IMR-90 (cell line): ENCODE measurements at regions of chr6 and their contacts with region 1.

Region 1: DNA sequence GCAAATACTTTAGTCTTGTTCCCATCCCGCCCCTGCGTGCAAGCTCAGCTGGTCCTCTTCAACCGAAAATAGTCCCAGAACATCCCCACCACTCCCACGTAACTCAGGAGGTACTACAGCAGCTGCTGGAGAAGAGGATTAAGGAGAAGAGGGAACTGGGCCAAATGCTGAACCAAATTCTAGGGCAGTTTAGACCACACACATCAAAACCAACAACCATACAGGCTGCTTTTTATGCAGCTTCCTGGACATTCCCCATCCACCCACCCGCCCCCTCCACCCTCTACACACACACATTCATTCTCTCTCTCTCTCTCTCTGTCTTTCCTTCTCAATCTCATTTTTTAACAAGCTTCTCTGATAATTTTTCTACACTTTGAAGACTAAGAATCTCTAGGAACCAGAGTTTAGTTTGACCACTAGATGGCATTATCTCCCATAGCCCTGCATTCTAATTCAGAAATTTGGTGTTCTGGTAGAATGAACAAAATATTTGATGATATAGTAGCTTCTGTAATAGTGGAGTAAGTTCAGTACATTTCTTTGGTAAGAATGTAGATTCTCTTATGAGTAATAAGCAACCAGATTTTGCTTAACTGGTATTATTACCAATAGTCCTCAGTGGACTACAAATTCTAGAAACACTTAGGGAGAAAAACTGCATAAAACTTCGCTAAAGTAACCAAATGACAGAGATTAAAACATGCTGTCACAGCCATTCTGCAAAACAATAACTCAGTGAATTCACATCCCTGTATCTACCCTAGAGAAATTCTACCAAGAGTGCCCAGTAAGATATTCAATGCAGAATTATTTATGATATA is 52.1 kb upstream of the BEND6 start:
- DNase-seq: peak; percentile 76
- ATAC-seq: peak; percentile 48
- H3K4me3 ChIP-seq: no peak overlapping the region
- H3K27ac ChIP-seq: peak overlapping the region; percentile 58
- H3K4me1 ChIP-seq: peaks cover 19% of the 10 kb centered on the region
- H3K27me3 ChIP-seq: no peaks in the 10 kb centered on the region
- CTCF ChIP-seq: peak; percentile 78
- POLR2A ChIP-seq: no peak
- RAD21 ChIP-seq: peak; percentile 77

Region 2: GRCh38 chr6:56424542-56425083 is 478.2 kb before region 1 on chr6:
- CTCF ChIA-PET with region 1: no interaction called
- POLR2A ChIA-PET with region 1: no interaction called
- dilution Hi-C with region 1: no loop called
- in situ Hi-C with region 1: no loop called
- intact Hi-C with region 1: no loop called
- DNase-seq: no peak
- ATAC-seq: no peak
- H3K4me3 ChIP-seq: no peak overlapping the region
- H3K27ac ChIP-seq: no peak overlapping the region
- H3K4me1 ChIP-seq: no peaks in the 10 kb centered on the region
- H3K27me3 ChIP-seq: peaks cover 5% of the 10 kb centered on the region
- CTCF ChIP-seq: no peak
- POLR2A ChIP-seq: no peak
- RAD21 ChIP-seq: no peak

Region 3: DNA sequence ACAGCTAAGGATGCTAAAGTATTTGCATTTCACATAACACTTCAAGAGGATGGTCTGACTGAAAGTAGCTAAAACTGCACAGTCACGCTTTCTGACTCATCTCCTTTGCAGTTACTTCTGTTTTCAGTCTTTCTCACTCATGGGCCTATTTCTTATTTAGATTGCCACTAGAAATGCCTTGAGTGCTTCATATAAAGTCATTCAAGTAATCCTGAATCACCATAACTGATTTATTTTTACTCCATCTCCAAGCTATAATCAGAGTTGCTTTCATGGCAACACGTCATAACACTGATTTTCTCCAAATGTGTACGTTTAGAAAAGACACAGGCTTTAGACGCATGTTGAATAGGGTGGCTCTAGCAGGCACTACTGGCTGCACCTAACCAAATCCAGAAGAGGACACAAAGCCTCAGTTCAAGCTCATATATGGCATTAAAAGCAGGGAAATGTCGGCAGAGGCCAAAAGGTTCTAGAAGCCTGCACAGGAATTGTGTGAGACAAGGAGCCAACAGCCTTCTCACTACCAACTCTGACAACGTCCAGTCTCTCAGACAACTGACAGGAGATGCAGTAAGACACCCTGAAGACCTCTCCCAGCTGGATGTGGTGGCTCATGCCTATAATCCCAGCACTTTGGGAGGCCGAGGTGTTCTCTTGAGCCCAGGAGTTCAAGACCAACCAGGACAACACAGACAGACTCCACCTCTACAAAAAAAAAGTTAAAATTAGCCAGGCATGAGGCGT is 12.0 kb before region 1 on chr6:
- CTCF ChIA-PET with region 1: interaction called, 12 read pairs
- POLR2A ChIA-PET with region 1: no interaction called
- dilution Hi-C with region 1: no loop called
- in situ Hi-C with region 1: no loop called
- intact Hi-C with region 1: no loop called
- DNase-seq: peak; percentile 97
- ATAC-seq: peak; percentile 91
- H3K4me3 ChIP-seq: no peak overlapping the region
- H3K27ac ChIP-seq: peak overlapping the region; percentile 79
- H3K4me1 ChIP-seq: peaks cover 14% of the 10 kb centered on the region
- H3K27me3 ChIP-seq: no peaks in the 10 kb centered on the region
- CTCF ChIP-seq: no peak
- POLR2A ChIP-seq: 0 out of 2 replicates have a peak, but pooled peaks have one; percentile 45
- RAD21 ChIP-seq: no peak

Region 4: DNA sequence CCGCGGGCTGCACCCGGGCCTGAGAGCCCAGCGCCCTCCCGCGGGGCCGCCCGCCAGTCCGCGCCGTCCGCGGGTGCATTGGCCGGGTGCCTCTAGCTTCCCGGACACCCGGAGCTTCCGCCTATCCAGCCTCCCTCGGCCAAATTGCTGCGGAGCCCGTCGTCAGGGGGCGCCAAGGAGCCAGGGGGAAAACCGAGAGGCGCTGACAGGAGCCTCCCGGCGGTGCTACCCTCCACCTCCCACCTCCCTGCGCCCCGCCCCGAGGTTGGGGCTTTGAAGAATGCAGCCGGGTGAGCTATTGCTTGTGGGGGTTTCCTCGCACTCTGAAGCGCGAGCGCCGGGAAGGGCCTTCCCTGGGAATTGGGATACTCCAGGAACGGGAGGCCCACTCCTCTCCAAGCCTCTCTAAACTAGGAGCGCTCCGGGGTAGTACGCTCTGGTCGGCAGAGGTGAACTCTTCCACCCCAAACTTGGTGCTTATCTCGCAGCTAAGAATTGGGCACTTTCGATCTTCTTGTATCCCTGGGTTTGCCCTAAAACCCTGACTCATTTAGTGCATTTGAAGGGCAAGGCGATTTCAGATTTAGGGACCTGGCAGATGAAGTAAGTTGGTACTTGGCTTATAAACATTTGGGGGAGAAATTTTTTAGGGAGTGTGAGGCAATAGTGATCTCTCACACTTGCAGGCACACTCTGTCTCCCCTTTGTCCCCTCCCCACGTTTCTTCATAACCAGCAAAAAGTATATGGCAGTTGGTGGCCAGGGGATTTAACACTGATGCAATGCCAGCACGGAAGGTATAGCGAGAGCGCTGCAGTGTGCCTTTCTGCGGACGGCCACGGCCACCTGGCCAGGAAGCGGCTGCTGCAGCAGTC is 52.6 kb after region 1 on chr6:
- CTCF ChIA-PET with region 1: interaction called, 10 read pairs
- POLR2A ChIA-PET with region 1: interaction called, 3 read pairs
- dilution Hi-C with region 1: no loop called
- in situ Hi-C with region 1: no loop called
- intact Hi-C with region 1: loop called (anchors 1 kb)
- DNase-seq: peak; percentile 91
- ATAC-seq: peak; percentile 78
- H3K4me3 ChIP-seq: peak overlapping the region; percentile 88
- H3K27ac ChIP-seq: peak overlapping the region; percentile 73
- H3K4me1 ChIP-seq: peaks cover 12% of the 10 kb centered on the region
- H3K27me3 ChIP-seq: no peaks in the 10 kb centered on the region
- CTCF ChIP-seq: peak; percentile 94
- POLR2A ChIP-seq: no peak; the same call in 1 of the 2 replicates
- RAD21 ChIP-seq: peak; percentile 72

Region 5: DNA sequence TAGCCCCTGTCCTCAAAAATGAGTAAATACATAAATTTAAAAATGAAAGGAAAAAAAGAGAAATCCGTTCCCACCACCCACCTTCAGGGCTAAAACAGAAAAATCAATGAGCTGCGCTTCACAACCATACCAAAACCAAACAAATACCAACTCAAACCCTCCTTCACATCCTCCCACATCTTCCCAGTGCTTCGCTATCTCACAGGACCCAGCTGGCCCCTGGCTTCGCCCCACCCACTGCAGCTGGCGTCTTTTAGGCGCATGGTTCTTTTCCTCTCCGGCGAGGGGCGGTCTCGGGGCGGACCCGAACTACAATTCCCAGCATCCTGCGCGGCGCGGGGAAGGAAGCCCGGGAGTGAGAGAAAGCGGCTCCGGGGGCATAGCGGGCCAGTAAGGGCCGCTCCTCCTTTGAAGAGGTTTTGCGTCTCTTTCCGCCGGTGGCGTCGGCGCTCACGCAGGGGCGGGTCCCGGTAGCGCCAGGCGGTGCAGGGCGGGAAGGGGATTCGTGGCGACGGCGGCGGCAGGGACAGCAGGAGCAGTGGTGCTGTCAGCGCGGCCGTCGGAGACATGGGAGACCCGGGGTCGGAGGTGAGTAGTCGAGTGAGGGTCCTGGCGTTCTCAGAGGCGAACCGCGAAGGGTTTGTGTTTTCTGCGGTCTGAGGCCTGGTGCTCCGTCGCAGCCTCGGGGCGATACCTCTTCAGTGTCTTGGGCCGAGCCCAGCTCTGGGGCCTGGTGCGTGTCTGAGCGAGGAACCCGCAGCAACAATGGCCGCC is 187.0 kb after region 1 on chr6 and contains the start of gene ZNF451:
- CTCF ChIA-PET with region 1: no interaction called
- POLR2A ChIA-PET with region 1: no interaction called
- dilution Hi-C with region 1: no loop called
- in situ Hi-C with region 1: no loop called
- intact Hi-C with region 1: loop called (anchors 5 kb)
- DNase-seq: peak; percentile 95
- ATAC-seq: peak; percentile 91
- H3K4me3 ChIP-seq: peak within 1 kb of the TSS; percentile 43
- H3K27ac ChIP-seq: peak within 1 kb of the TSS; percentile 65
- H3K4me1 ChIP-seq: peaks cover 10% of the 10 kb centered on the region
- H3K27me3 ChIP-seq: no peaks in the 10 kb centered on the region
- CTCF ChIP-seq: 0 out of 2 replicates have a peak, but pooled peaks have one; percentile 8
- POLR2A ChIP-seq: peak; percentile 87
- RAD21 ChIP-seq: 0 out of 2 replicates have a peak, but pooled peaks have one; percentile 11
- total RNA-seq, gene ZNF451: 48.6 and 63.0 TPM in 2 replicates

Region 6: DNA sequence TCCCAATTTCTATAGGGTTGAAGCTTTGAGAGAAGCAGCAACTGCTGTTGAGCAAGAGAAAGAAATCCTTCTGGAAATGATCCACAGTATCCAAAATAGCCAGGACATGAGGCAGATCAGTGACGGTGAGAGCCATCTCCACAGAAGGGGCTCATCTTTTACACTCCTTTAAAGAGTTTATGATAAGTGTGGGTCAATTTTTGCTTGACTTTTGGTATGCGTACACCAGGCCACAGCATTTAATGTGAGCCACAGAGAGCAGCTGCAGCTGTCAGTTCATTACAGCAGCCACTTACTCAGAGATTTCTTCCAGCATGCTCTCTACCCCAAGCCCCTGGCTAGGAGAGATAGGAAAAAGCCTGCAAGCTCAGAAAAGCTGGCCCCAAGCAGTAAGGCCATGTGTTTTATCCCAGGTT is 279.2 kb after region 1 on chr6:
- CTCF ChIA-PET with region 1: no interaction called
- POLR2A ChIA-PET with region 1: no interaction called
- dilution Hi-C with region 1: no loop called
- in situ Hi-C with region 1: loop called (anchors 10 kb)
- intact Hi-C with region 1: no loop called
- DNase-seq: peak; percentile 83
- ATAC-seq: peak; percentile 65
- H3K4me3 ChIP-seq: no peak overlapping the region
- H3K27ac ChIP-seq: peak overlapping the region; percentile 50; the same call in 1 of the 2 replicates
- H3K4me1 ChIP-seq: peaks cover 20% of the 10 kb centered on the region
- H3K27me3 ChIP-seq: no peaks in the 10 kb centered on the region
- CTCF ChIP-seq: no peak
- POLR2A ChIP-seq: no peak
- RAD21 ChIP-seq: no peak

Region 7: GRCh38 chr6:57262901-57263694 is 360.2 kb after region 1 on chr6:
- CTCF ChIA-PET with region 1: no interaction called
- POLR2A ChIA-PET with region 1: no interaction called
- dilution Hi-C with region 1: no loop called
- in situ Hi-C with region 1: no loop called
- intact Hi-C with region 1: no loop called
- DNase-seq: peak; percentile 98
- ATAC-seq: peak; percentile 67
- H3K4me3 ChIP-seq: no peak overlapping the region
- H3K27ac ChIP-seq: peak overlapping the region; percentile 88
- H3K4me1 ChIP-seq: peaks cover 29% of the 10 kb centered on the region
- H3K27me3 ChIP-seq: no peaks in the 10 kb centered on the region
- CTCF ChIP-seq: no peak
- POLR2A ChIP-seq: no peak
- RAD21 ChIP-seq: no peak